ENCODE measurements at regions of chr9 and their contacts with region 1.

Region 1: DNA sequence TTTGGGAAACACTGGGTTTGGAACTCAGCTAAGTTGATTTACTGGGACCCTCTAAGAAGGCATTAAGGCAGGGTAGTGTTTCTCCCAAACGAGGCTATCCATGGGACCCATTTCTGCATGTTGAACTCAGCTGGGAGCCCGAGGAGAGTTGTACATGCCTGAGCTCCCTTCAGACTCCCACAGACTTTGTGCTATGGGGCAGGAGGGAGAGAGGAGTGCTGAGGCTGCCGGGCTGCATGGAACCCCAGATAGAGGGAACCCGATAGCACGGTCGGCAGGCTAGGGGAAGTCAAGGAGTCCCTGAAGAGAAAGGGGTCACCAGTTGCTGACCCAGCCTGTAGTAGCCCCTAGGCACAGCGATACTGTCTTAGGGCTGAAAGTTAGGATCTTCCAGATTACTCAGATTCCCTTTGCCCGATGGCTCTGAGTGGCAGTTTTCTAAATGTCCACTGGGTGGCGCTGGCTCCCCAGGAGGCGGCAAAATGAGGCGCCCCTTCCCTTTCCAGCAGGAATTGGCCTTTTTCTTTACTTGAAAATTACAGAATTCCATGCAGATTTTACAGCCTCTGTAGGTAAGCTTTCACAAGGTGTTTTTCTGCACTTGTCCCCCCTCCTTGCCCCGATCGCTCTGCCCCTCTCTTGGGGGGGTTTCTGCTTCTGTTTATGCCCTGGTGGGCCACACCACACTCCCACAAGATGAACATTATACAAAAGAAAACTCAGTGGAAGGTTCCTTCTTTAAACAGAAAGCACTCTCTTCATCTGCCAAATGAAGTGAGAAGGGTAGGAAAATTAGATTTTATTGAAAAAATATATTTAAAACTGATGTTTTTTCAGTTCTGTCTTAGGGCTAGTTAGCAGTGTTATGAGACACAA is 17.8 kb downstream of the NANS start:
- DNase-seq: no peak
- H3K4me3 ChIP-seq: no peak overlapping the region
- H3K27ac ChIP-seq: peak overlapping the region in 3 of 4 donors; percentile 15 to 32 (median 24)
- H3K4me1 ChIP-seq: peaks cover 6 to 20% (median 10%) of the 10 kb centered on the region in 4 donors
- H3K27me3 ChIP-seq: no peaks in the 10 kb centered on the region
- CTCF ChIP-seq: peak; percentile 72 to 92 (median 80)
- EP300 ChIP-seq: no peak
- POLR2A ChIP-seq: no peak

Region 2: DNA sequence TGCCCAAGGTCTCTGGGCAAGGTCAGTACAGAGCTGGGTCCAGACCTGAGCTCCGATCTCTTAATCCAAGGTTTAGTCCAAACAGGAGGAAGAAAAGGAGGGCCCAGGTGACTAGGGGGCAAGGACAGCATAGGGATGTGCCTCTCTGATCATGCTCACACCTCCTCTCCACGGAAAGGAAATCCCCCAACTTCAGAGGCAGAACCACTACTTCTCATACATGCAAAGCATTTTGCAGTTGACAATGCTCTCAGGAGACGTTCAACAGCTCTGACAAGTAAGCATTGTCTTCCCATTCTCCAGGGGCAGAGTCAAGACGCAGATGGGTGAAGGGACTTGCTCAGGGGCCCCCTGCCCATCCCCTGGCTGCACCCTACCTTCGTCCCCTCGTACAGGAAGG is 126.7 kb after region 1 on chr9:
- intact Hi-C with region 1: loop called (anchors 5 kb)
- DNase-seq: no peak
- H3K4me3 ChIP-seq: no peak overlapping the region
- H3K27ac ChIP-seq: no peak overlapping the region
- H3K4me1 ChIP-seq: peaks cover 0 to 8% (median 7%) of the 10 kb centered on the region in 4 donors
- H3K27me3 ChIP-seq: no peaks in the 10 kb centered on the region
- CTCF ChIP-seq: no peak
- EP300 ChIP-seq: no peak
- POLR2A ChIP-seq: no peak

Measured in esophagus muscularis mucosa (tissue), 4 donors.